ENCODE measurements at regions of chr7 and their contacts with region 1.

Region 1: DNA sequence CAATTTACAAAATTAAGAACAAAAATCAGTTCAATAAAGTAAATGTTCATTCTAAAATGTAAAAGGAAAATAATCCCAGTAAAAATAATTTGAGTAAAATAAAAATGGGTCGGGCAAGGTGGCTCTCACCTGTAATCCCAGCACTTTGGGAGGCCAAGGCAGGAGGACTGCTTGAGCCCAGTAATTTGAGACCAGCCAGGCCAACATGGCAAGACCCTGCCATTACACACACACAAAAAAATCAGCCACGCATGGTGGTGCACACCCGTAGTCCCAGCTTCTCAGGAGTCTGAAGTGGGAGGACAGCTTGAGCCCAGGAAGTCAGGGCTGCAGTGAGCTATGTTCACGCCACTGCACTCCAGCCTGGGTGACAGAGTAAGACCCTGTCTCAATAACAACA is 34.4 kb downstream of the CNOT4 start:
- DNase-seq: no peak
- ATAC-seq: no peak
- H3K4me3 ChIP-seq: no peak overlapping the region
- H3K27ac ChIP-seq: no peak overlapping the region
- H3K4me1 ChIP-seq: no peaks in the 10 kb centered on the region
- H3K27me3 ChIP-seq: no peaks in the 10 kb centered on the region
- CTCF ChIP-seq: no peak

Region 2: GRCh38 chr7:135493362-135493761 is 17.8 kb after region 1 on chr7:
- CTCF ChIA-PET with region 1: no interaction called
- POLR2A ChIA-PET with region 1: interaction called, 10 read pairs
- in situ Hi-C with region 1: no loop called
- intact Hi-C with region 1: no loop called
- DNase-seq: no peak
- ATAC-seq: no peak
- H3K4me3 ChIP-seq: no peak overlapping the region
- H3K27ac ChIP-seq: no peak overlapping the region
- H3K4me1 ChIP-seq: no peaks in the 10 kb centered on the region
- H3K27me3 ChIP-seq: no peaks in the 10 kb centered on the region
- CTCF ChIP-seq: no peak

Region 3: GRCh38 chr7:136652635-136653370 is 1177.3 kb after region 1 on chr7:
- CTCF ChIA-PET with region 1: no interaction called
- POLR2A ChIA-PET with region 1: no interaction called
- in situ Hi-C with region 1: no loop called
- intact Hi-C with region 1: no loop called
- DNase-seq: no peak
- ATAC-seq: no peak
- H3K4me3 ChIP-seq: no peak overlapping the region
- H3K27ac ChIP-seq: no peak overlapping the region
- H3K4me1 ChIP-seq: no peaks in the 10 kb centered on the region
- H3K27me3 ChIP-seq: no peaks in the 10 kb centered on the region
- CTCF ChIP-seq: no peak